ENCODE measurements at regions of chr4 and their contacts with region 1.

Region 1: DNA sequence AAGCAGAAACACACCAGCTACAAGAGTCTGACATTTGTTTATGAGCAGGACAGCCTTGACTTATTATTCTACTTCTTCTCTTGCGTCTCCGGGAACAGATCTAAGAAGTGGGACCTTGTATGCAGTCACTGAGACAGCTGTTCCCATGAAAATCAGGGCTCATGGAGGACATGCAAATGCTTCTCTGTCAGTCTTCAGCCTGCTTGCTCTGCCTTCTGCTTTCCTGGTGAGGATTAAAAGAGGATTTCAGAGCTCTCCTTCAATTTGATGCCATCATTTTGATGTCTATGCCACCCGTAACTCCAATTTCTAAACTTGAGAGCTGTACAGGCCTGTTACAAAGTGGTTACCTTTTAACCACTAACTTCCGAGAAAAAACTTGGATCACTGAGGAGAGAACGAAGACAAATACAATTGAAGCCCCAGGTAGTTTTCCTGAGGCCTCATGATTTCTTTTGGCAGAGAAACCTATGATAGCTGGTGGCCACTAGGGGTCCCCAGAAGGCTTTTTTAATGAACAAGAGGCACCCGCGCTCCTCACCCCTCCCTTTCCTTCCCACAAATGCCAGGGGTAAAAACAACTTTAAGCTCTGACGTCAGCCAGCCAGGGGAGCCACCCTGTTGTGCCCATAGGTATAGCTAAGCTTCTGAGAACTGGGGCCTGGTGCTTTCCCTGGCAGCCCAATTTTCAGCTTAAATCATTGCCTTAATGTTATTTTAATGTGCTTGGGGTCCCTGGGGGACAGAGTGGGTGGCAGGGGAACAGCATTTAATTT is 97.0 kb downstream of the DDIT4L start:
- DNase-seq: peak; percentile 94
- ATAC-seq: peak; percentile 94
- H3K4me3 Mint-ChIP-seq: peak overlapping the region; percentile 33
- H3K27ac Mint-ChIP-seq: peak overlapping the region; percentile 94
- H3K4me1 Mint-ChIP-seq: peaks cover 56% of the 10 kb centered on the region
- H3K27me3 Mint-ChIP-seq: peaks cover 1% of the 10 kb centered on the region

Region 2: DNA sequence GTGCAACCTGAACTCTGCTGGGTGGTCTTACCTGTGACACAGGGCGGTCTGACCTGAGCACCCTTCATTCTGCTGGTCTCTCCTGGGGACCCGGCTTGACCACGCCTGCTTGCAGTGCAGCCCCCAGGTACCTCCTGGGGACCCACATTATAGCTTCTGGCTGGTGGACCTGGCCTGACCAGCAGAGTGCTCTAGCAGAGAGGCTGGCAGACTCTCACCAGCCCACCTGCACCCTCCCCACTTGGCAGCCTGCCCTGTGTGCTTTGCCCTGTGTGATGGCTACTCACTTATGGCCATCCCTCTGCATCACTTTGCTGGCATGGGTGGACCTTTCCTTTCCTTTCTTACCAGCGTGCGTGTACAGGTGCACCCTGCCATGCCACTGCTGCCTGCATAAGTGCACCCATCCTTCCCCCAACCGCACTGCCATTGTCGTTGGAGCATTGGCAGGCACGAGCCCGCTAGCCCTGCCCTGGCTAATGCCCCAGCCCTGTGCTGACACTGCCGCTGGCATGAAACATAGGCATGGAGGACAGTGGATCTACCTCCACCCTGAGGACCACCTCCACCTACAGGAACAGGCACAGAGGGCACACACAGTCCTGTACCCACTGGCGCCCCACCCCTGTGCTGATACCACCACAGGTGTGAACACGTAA is 121.7 kb before region 1 on chr4:
- CTCF ChIA-PET with region 1: no interaction called
- POLR2A ChIA-PET with region 1: no interaction called
- intact Hi-C with region 1: no loop called
- DNase-seq: no peak
- ATAC-seq: no peak
- H3K4me3 Mint-ChIP-seq: no peak overlapping the region
- H3K27ac Mint-ChIP-seq: no peak overlapping the region
- H3K4me1 Mint-ChIP-seq: no peaks in the 10 kb centered on the region
- H3K27me3 Mint-ChIP-seq: no peaks in the 10 kb centered on the region

Region 3: DNA sequence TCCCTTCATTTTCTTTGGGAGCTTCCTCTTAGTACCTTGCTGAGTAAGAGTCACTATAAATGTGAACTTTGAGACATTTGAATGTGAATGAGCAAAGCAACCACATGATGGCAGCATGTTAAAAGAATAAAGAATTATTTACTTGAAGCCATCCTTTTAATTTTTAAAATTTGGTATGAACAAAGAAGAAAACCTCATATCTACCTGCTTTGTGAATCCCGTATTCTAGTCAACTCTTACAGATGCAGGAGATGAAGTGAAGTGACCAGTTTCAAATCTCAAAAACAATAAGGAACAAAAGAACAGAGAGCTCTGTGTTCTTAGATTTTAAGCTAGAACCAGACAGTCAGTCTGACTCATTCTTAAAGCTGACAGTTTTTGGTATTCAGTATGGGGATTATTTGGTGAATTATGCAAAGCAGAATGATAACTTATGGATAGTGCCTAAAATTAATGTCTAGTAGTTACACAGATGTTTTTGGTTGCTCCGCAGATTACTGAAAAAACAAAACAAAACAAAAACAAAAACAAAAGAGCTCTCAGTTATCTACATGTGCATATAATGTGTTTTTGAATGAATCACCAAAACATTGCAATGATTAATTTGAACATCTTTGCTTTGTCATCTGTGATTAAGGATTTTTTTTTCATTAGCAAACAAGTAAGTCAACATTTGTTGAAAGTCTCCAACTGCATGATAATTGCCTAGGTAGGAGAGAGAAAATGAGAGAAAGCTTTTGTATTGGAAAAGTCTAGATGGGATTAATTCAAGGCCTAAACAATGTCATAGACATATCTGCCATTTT is 95.0 kb before region 1 on chr4:
- CTCF ChIA-PET with region 1: interaction called, 15 read pairs
- POLR2A ChIA-PET with region 1: no interaction called
- intact Hi-C with region 1: loop called in 1 of 2 experiments (anchors 5 kb)
- DNase-seq: no peak
- ATAC-seq: peak; percentile 76
- H3K4me3 Mint-ChIP-seq: no peak overlapping the region
- H3K27ac Mint-ChIP-seq: no peak overlapping the region
- H3K4me1 Mint-ChIP-seq: peaks cover 5% of the 10 kb centered on the region
- H3K27me3 Mint-ChIP-seq: peaks cover 4% of the 10 kb centered on the region

Region 4: GRCh38 chr4:100106982-100107381 is 13.7 kb after region 1 on chr4:
- CTCF ChIA-PET with region 1: interaction called, 13 read pairs
- POLR2A ChIA-PET with region 1: no interaction called
- intact Hi-C with region 1: no loop called
- DNase-seq: peak; percentile 24
- ATAC-seq: peak; percentile 76
- H3K4me3 Mint-ChIP-seq: no peak overlapping the region
- H3K27ac Mint-ChIP-seq: no peak overlapping the region
- H3K4me1 Mint-ChIP-seq: peaks cover 15% of the 10 kb centered on the region
- H3K27me3 Mint-ChIP-seq: no peaks in the 10 kb centered on the region

Region 5: GRCh38 chr4:100823066-100823992 is 730.0 kb after region 1 on chr4:
- CTCF ChIA-PET with region 1: no interaction called
- POLR2A ChIA-PET with region 1: no interaction called
- intact Hi-C with region 1: loop called in 1 of 2 experiments (anchors 5 kb)
- DNase-seq: peak; percentile 49
- ATAC-seq: peak; percentile 83
- H3K4me3 Mint-ChIP-seq: no peak overlapping the region
- H3K27ac Mint-ChIP-seq: peak overlapping the region; percentile 22
- H3K4me1 Mint-ChIP-seq: peaks cover 13% of the 10 kb centered on the region
- H3K27me3 Mint-ChIP-seq: peaks cover 2% of the 10 kb centered on the region

Region 6: DNA sequence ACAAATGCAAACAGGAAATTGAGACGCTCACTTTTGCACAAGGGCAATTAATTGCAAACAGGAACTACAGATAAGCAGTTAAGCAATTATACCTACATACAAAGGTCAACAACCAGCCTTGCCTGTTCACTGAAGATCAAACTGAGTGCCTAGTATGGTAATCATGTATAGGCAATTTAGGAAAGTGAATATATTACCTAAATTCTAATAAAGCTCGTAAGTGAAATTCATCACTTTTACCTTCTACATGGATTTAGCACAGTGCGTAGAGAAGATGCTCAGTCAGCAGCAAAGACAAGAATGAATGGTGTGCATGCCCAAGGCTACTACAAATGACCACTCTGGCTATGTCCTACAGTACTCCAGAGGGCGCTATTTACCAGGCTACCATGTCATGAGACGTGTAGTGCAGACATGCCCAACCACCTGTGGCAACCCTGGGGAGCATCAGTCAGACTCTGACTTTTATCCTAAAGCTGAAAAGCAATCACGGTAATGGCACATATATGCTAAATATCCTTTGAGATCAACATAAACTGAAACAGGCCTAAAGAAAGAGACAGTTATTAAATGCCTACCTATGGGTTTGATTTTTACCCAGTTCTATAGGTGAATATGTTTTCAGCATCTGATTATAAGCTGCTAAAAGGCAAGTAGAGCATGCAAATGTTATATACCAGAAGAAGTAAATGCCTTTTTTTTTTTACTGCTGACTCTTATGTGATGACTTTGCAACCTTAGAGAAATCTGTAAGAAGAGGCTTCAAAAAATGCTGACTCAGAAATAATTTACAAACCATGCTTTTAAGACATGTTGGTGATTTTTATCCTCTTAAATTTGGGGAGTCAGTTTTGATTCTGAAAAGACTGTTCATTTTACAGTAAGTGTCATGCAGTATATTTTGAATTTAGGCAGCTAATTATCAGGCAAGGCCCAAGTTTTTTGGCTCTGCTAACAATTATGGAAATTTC is 1076.0 kb after region 1 on chr4:
- CTCF ChIA-PET with region 1: no interaction called
- POLR2A ChIA-PET with region 1: no interaction called
- intact Hi-C with region 1: loop called in 1 of 2 experiments (anchors 10 kb)
- DNase-seq: peak; percentile 76
- ATAC-seq: peak; percentile 99
- H3K4me3 Mint-ChIP-seq: no peak overlapping the region
- H3K27ac Mint-ChIP-seq: no peak overlapping the region
- H3K4me1 Mint-ChIP-seq: peaks cover 2% of the 10 kb centered on the region
- H3K27me3 Mint-ChIP-seq: no peaks in the 10 kb centered on the region

Region 7: DNA sequence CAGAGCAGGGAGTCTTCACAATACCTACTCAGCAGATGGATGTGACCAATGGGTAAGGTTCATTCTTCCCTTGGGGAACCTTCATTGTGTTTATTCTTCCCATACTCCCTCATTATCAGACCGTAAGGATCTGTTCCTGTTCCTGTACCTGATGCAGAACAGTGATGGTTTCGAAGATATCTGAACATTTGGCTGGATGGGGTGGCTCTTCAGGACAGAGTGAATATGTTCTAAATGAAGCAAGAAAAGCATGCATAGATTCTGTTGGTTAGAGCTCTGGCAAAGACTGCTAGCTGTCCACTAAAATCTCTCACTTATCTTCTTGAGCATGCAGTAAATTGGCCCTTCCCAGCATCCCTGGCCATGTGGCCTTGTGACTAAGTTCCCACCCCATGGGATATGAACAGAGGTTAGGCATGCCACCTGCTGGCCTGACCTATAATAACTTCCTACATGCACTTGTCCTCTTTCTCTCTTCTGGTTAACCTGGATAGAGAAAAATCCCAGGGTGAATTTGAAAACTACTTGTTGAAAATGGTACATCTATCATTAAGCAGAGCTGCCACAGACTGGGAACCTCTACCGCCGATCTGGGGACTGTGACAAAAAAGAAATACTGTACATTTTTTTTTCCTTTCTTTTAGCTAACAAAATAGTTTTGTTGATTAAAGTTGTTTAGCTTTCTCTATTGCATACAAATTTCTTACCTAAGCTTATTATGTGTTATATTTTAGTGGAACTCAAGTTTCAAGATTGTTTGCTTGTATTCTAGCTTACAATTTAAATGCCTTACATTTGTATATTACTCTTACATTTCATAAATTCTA is 1637.2 kb after region 1 on chr4:
- CTCF ChIA-PET with region 1: interaction called, 3 read pairs
- POLR2A ChIA-PET with region 1: no interaction called
- intact Hi-C with region 1: loop called (anchors 1 to 2 kb)
- DNase-seq: peak; percentile 74
- ATAC-seq: peak; percentile 83
- H3K4me3 Mint-ChIP-seq: no peak overlapping the region
- H3K27ac Mint-ChIP-seq: no peak overlapping the region
- H3K4me1 Mint-ChIP-seq: no peaks in the 10 kb centered on the region
- H3K27me3 Mint-ChIP-seq: peaks cover 3% of the 10 kb centered on the region

Measured in activated CD4-positive, alpha-beta T cell treated with anti-CD3 and anti-CD28 coated beads for 36 hours (primary cell).